Natural killer cell (primary cell): ENCODE measurements at regions of chr5 and their contacts with region 1.

Region 1: GRCh38 chr5:79133657-79134451 is 22.2 kb downstream of the BHMT start:
- DNase-seq: peak; percentile 28 to 77
- ATAC-seq: peak; percentile 72 to 85 (median 78)
- H3K4me3 ChIP-seq: no peak overlapping the region
- H3K4me3 Mint-ChIP-seq: peak overlapping the region; percentile 82
- H3K27ac ChIP-seq: no peak overlapping the region
- H3K27ac Mint-ChIP-seq: peak overlapping the region in 1 of 2 donors; percentile 59
- H3K4me1 ChIP-seq: peaks cover 8% of the 10 kb centered on the region
- H3K4me1 Mint-ChIP-seq: peaks cover 10% of the 10 kb centered on the region in 2 donors
- H3K27me3 ChIP-seq: no peaks in the 10 kb centered on the region
- H3K27me3 Mint-ChIP-seq: peaks cover 0 to 7% of the 10 kb centered on the region in 2 donors
- CTCF ChIP-seq: no peak

Region 2: GRCh38 chr5:78320401-78320800 is 813.5 kb before region 1 on chr5:
- intact Hi-C with region 1: loop called (anchors 2 kb)
- DNase-seq: peak in 1 of 2 donors; percentile 48
- ATAC-seq: no peak
- H3K4me3 ChIP-seq: no peak overlapping the region
- H3K4me3 Mint-ChIP-seq: no peak overlapping the region
- H3K27ac ChIP-seq: no peak overlapping the region
- H3K27ac Mint-ChIP-seq: no peak overlapping the region
- H3K4me1 ChIP-seq: no peaks in the 10 kb centered on the region
- H3K4me1 Mint-ChIP-seq: no peaks in the 10 kb centered on the region
- H3K27me3 ChIP-seq: no peaks in the 10 kb centered on the region
- H3K27me3 Mint-ChIP-seq: peaks cover 8 to 14% of the 10 kb centered on the region in 2 donors
- CTCF ChIP-seq: peak; percentile 39

Region 3: GRCh38 chr5:78886341-78887230 is 247.3 kb before region 1 on chr5:
- intact Hi-C with region 1: loop called (anchors 1 kb)
- DNase-seq: peak in 1 of 2 donors; percentile 29
- ATAC-seq: peak in 1 of 3 donors; percentile 42
- H3K4me3 ChIP-seq: no peak overlapping the region
- H3K4me3 Mint-ChIP-seq: no peak overlapping the region
- H3K27ac ChIP-seq: no peak overlapping the region
- H3K27ac Mint-ChIP-seq: no peak overlapping the region
- H3K4me1 ChIP-seq: peaks cover 12% of the 10 kb centered on the region
- H3K4me1 Mint-ChIP-seq: peaks cover 19 to 26% of the 10 kb centered on the region in 2 donors
- H3K27me3 ChIP-seq: no peaks in the 10 kb centered on the region
- H3K27me3 Mint-ChIP-seq: peaks cover 10 to 35% of the 10 kb centered on the region in 2 donors
- CTCF ChIP-seq: peak; percentile 44

Region 4: GRCh38 chr5:78984439-78985115 is 149.3 kb before region 1 on chr5:
- intact Hi-C with region 1: loop called (anchors 5 kb)
- DNase-seq: peak; percentile 76 to 88
- ATAC-seq: peak; percentile 70 to 79 (median 76)
- H3K4me3 ChIP-seq: peak overlapping the region; percentile 68
- H3K4me3 Mint-ChIP-seq: peak overlapping the region; percentile 92
- H3K27ac ChIP-seq: peak overlapping the region; percentile 85
- H3K27ac Mint-ChIP-seq: peak overlapping the region; percentile 94 to 95
- H3K4me1 ChIP-seq: peaks cover 13% of the 10 kb centered on the region
- H3K4me1 Mint-ChIP-seq: peaks cover 25% of the 10 kb centered on the region in 2 donors
- H3K27me3 ChIP-seq: no peaks in the 10 kb centered on the region
- H3K27me3 Mint-ChIP-seq: no peaks in the 10 kb centered on the region
- CTCF ChIP-seq: no peak

Region 5: GRCh38 chr5:79020861-79021561 is 112.8 kb before region 1 on chr5:
- intact Hi-C with region 1: loop called (anchors 2 kb)
- DNase-seq: peak in 1 of 2 donors; percentile 60
- ATAC-seq: peak; percentile 60 to 81 (median 67)
- H3K4me3 ChIP-seq: no peak overlapping the region
- H3K4me3 Mint-ChIP-seq: no peak overlapping the region
- H3K27ac ChIP-seq: no peak overlapping the region
- H3K27ac Mint-ChIP-seq: no peak overlapping the region
- H3K4me1 ChIP-seq: peaks cover 4% of the 10 kb centered on the region
- H3K4me1 Mint-ChIP-seq: peaks cover 14 to 15% of the 10 kb centered on the region in 2 donors
- H3K27me3 ChIP-seq: peaks cover 14% of the 10 kb centered on the region
- H3K27me3 Mint-ChIP-seq: peaks cover 34 to 84% of the 10 kb centered on the region in 2 donors
- CTCF ChIP-seq: peak; percentile 44

Region 6: DNA sequence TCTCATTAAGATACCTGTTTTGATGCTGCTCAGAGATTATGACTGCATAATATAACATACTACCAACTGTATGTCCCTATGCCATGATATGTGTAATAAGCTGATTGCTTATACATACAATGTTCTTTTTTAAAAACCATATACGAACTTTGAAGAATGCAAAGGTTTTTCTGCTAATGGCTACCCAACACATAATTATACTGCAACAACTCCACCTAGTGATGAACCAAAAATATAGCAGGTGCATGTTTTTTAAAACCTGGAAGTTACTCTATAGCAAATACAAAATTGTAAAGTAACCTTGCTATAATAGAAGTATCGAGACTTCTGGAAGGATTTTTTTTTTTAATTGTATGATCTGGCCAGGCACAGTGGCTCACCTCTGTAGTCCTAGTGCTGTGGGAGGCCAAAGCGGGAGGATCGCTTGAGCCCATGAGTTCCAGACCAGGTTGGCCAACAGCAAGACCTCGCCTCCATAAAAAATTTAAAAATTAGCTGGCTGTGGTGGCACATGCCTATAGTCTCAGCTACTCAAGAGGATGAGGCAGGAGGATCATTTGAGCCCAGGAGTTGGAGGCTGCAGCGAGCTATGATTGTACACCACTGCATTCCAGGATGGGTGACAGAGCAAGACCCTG is 331.0 kb after region 1 on chr5:
- intact Hi-C with region 1: loop called (anchors 10 kb)
- DNase-seq: peak in 1 of 2 donors; percentile 43
- ATAC-seq: peak in 2 of 3 donors; percentile 49 to 59
- H3K4me3 ChIP-seq: no peak overlapping the region
- H3K4me3 Mint-ChIP-seq: no peak overlapping the region
- H3K27ac ChIP-seq: no peak overlapping the region
- H3K27ac Mint-ChIP-seq: no peak overlapping the region
- H3K4me1 ChIP-seq: no peaks in the 10 kb centered on the region
- H3K4me1 Mint-ChIP-seq: peaks cover 0 to 4% of the 10 kb centered on the region in 2 donors
- H3K27me3 ChIP-seq: peaks cover 2% of the 10 kb centered on the region
- H3K27me3 Mint-ChIP-seq: peaks cover 0 to 4% of the 10 kb centered on the region in 2 donors
- CTCF ChIP-seq: peak; percentile 47

Region 7: GRCh38 chr5:79857714-79858409 is 724.0 kb after region 1 on chr5:
- intact Hi-C with region 1: loop called (anchors 2 kb)
- DNase-seq: peak; percentile 76 to 87
- ATAC-seq: peak; percentile 70 to 84 (median 71)
- H3K4me3 ChIP-seq: no peak overlapping the region
- H3K4me3 Mint-ChIP-seq: no peak overlapping the region
- H3K27ac ChIP-seq: no peak overlapping the region
- H3K27ac Mint-ChIP-seq: no peak overlapping the region
- H3K4me1 ChIP-seq: no peaks in the 10 kb centered on the region
- H3K4me1 Mint-ChIP-seq: no peaks in the 10 kb centered on the region
- H3K27me3 ChIP-seq: no peaks in the 10 kb centered on the region
- H3K27me3 Mint-ChIP-seq: peaks cover 16 to 23% of the 10 kb centered on the region in 2 donors
- CTCF ChIP-seq: peak; percentile 93